ENCODE measurements at regions of chr1 and their contacts with region 1.

Region 1: DNA sequence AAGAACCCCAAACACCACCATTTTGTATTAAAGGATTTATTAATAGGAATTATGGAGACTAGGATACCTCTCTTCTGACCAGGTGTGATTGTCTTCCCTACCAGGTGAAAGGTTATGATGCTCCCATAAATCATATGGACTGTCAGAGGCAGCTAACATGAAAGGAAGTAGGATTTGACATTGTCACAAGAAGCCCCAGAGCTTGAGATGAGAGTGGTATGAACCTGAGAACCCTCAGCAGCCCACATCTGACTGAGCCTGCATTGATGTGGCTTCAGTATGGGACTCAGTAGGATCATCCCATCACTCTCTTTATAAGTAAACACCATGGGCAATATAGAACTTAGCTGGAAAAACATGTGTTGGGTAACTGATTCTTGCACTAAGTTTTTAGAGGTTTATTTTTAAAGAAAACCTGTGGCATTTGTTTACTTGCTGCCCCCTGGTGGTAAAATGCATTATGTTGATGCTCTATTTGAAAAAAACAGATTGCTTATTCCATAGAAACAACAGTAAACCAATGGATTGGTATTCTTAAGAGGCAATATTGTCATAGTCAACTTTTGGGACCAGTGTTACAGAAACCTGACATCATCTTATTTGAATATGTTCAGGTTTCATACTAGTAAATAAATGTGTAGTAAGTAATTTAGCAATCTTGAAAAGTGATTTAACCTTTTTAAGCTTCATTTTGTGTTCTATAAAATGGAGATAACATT is 16.6 kb upstream of the CACYBP start:
- DNase-seq: no peak
- ATAC-seq: no peak

Region 2: GRCh38 chr1:174769961-174770549 is 213.1 kb before region 1 on chr1:
- intact Hi-C with region 1: loop called (anchors 5 kb)
- DNase-seq: no peak
- ATAC-seq: peak; percentile 69

Region 3: DNA sequence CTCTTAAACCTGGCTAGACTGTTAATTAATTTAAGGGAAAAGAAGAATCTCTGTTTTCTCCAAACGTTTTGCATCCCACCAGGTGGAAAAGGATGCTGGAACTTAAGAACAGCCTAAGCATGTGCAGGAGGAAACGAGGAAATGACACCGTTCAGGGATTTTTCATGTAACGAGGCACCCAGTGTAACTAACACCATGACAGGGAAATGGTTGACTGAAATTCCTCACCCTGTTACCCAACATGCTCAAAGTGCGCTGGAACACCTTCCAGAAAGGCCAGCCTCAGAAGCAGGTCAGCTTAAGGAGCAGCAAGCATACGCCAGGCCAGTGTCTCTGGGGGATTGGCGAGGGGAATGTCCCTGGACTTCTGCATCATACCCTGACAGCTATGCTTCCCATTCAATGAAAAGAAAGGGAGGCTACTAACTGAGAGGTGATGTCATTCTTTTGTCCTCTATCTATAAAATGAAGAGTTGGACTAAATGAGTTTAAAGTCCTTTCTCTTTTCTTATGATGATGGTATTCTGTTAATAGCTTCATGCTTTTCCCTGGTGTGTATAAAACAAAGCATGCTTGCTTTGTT is 106.1 kb after region 1 on chr1:
- intact Hi-C with region 1: no loop called
- DNase-seq: no peak
- ATAC-seq: peak; percentile 26